H1 (cell line): ENCODE measurements at regions of chr22 and their contacts with region 1.

Region 1: GRCh38 chr22:27919222-27919941 is at the start of gene PITPNB:
- DNase-seq: peak; percentile 98 to 100
- H3K4me3 ChIP-seq: peak within 1 kb of the TSS; percentile 78 to 94 (median 84)
- H3K27ac ChIP-seq: peak within 1 kb of the TSS; percentile 57
- H3K4me1 ChIP-seq: peaks cover 2 to 3% (median 3%) of the 10 kb centered on the region in 4 experiments; a peak in 6 of 7 replicates
- H3K27me3 ChIP-seq: no peaks in the 10 kb centered on the region
- CTCF ChIP-seq: no peak
- EP300 ChIP-seq: no peak
- POLR2A ChIP-seq: peak; percentile 27 to 61; a peak in 2 of 3 replicates
- RAD21 ChIP-seq: no peak
- total RNA-seq, gene PITPNB: 83.0 and 89.3 TPM in 2 replicates

Region 2: GRCh38 chr22:27662359-27663030 is 256.9 kb before region 1 on chr22:
- CTCF ChIA-PET with region 1: no interaction called
- POLR2A ChIA-PET with region 1: no interaction called
- DNase-seq: no peak
- H3K4me3 ChIP-seq: no peak overlapping the region
- H3K27ac ChIP-seq: no peak overlapping the region
- H3K4me1 ChIP-seq: peaks cover 0 to 6% (median 2%) of the 10 kb centered on the region in 4 experiments; a peak in 3 of 7 replicates
- H3K27me3 ChIP-seq: no peaks in the 10 kb centered on the region
- CTCF ChIP-seq: no peak
- EP300 ChIP-seq: no peak
- POLR2A ChIP-seq: no peak
- RAD21 ChIP-seq: no peak

Region 3: DNA sequence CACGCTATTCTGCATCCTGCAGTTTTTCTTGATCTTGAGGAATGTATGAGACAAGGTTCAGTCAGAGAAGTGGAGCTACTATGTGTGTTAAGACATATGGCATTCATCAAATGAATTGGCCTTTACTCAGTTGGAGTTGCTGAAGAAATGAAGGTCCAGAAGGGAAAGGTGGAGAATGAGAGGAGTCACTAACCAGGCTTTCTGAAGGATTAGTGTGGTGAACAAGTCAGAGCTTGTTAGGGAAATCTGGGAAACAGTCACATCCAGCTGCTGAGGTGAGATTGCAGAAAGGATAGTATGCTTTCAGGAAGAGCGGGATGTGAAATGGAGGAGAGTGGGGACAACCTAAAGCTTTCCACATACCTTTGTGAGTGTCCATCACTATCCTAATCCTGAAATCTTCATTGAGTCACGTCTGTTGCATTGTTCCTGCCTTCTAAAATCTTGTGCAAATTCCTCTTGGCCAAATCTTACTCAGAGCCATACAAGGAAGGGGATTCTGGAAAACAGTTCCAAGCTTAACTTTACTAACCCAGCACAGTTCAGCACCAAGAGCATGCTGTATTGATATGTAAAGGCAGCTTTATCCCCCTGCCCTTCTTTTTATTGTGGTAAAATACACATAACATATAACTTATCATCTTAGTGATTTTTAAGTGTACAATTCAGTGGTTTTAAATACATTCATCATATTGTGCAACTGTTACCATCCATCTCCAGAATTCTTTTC is 11.1 kb after region 1 on chr22:
- CTCF ChIA-PET with region 1: interaction called, 5 read pairs
- POLR2A ChIA-PET with region 1: interaction called, 14 read pairs
- DNase-seq: no peak
- H3K4me3 ChIP-seq: no peak overlapping the region
- H3K27ac ChIP-seq: peak overlapping the region; percentile 40; the same call in 1 of the 2 replicates
- H3K4me1 ChIP-seq: peaks cover 0 to 6% (median 3%) of the 10 kb centered on the region in 4 experiments; a peak in 4 of 7 replicates
- H3K27me3 ChIP-seq: no peaks in the 10 kb centered on the region
- CTCF ChIP-seq: no peak
- EP300 ChIP-seq: no peak
- POLR2A ChIP-seq: no peak
- RAD21 ChIP-seq: no peak

Region 4: DNA sequence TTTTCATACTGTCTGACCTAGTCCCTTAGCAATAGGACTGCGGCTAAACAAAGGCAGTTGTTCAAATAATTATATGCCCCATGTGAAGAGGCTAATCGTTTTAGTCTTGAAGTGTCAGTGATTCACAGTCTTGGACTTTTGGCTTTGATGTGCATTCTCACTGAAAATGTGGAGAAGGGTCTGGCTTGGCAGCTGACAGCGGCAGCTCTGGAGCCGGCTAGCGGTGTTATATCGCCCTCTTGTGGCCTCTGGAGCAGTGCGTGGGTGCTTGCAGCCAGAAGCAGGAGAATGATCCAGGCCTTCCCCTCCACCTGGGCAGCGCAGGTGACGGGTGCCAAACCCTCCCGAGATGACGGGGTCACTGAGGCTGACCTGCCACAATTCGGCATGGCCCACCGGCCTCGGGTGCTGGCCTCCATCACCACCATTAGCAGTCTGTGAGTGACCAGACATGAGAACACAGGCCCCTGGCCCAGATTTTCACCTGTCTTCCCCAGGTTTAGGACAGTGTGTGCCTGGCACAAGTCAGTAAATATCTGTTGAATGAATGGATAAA is 90.0 kb after region 1 on chr22:
- CTCF ChIA-PET with region 1: interaction called, 15 read pairs
- POLR2A ChIA-PET with region 1: no interaction called
- DNase-seq: peak; percentile 67 to 89
- H3K4me3 ChIP-seq: no peak overlapping the region
- H3K27ac ChIP-seq: no peak overlapping the region
- H3K4me1 ChIP-seq: no peaks in the 10 kb centered on the region; a peak in 1 of 7 replicates
- H3K27me3 ChIP-seq: no peaks in the 10 kb centered on the region
- CTCF ChIP-seq: peak; percentile 96 to 98 (median 97)
- EP300 ChIP-seq: no peak
- POLR2A ChIP-seq: no peak
- RAD21 ChIP-seq: peak; percentile 99

Region 5: GRCh38 chr22:28034760-28035401 is 115.5 kb after region 1 on chr22:
- CTCF ChIA-PET with region 1: no interaction called
- POLR2A ChIA-PET with region 1: no interaction called
- DNase-seq: no peak
- H3K4me3 ChIP-seq: no peak overlapping the region
- H3K27ac ChIP-seq: no peak overlapping the region
- H3K4me1 ChIP-seq: no peaks in the 10 kb centered on the region
- H3K27me3 ChIP-seq: no peaks in the 10 kb centered on the region
- CTCF ChIP-seq: no peak
- EP300 ChIP-seq: no peak
- POLR2A ChIP-seq: no peak
- RAD21 ChIP-seq: no peak